Naive thymus-derived CD8-positive, alpha-beta T cell (primary cell): ENCODE measurements at regions of chr12 and their contacts with region 1.

Region 1: DNA sequence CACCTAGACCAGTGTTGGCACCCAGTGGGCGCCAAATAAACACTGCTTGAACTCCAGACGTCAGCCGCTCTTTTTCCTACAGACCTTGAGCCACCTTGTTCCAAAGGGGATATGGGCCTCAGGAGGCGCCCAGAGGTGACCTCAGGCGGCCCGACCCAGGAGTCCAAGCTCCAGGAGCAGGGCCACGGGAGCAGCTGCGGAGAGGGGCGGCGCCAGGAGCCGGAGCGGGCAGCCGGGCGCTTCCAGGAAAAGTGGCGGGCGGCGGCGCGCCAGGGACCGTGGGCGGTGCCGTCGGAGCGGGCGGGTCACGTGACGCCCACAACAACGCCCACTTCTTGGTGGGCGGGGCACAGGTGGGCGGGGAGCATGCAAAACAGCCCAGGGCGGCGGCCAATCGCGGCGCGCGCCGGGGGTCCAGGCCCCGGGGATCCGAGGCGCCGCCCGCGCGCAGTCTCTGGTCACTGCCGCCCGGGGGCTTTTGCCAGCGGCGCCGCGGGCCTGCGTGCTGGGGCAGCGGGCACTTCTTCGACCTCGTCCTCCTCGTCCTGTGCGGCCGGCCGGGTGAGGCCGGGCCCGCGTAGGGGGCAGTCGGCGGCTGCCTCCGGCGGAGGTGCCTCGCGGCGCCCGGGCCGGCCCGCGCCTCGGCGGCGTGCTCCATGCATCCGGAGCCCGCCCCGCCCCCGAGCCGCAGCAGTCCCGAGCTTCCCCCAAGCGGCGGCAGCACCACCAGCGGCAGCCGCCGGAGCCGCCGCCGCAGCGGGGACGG is at the start of gene ORAI1:
- DNase-seq: peak; percentile 91 to 98 (median 96)
- ATAC-seq: peak; percentile 68 to 69
- H3K4me3 Mint-ChIP-seq: peak within 1 kb of the TSS; percentile 93 to 98 (median 94)
- H3K27ac Mint-ChIP-seq: peak within 1 kb of the TSS; percentile 91 to 98 (median 97)
- H3K4me1 Mint-ChIP-seq: peaks cover 22 to 53% (median 48%) of the 10 kb centered on the region in 4 donors
- H3K27me3 Mint-ChIP-seq: no peaks in the 10 kb centered on the region
- polyA plus RNA-seq, gene ORAI1: 122 to 158 (median 134) TPM

Region 2: DNA sequence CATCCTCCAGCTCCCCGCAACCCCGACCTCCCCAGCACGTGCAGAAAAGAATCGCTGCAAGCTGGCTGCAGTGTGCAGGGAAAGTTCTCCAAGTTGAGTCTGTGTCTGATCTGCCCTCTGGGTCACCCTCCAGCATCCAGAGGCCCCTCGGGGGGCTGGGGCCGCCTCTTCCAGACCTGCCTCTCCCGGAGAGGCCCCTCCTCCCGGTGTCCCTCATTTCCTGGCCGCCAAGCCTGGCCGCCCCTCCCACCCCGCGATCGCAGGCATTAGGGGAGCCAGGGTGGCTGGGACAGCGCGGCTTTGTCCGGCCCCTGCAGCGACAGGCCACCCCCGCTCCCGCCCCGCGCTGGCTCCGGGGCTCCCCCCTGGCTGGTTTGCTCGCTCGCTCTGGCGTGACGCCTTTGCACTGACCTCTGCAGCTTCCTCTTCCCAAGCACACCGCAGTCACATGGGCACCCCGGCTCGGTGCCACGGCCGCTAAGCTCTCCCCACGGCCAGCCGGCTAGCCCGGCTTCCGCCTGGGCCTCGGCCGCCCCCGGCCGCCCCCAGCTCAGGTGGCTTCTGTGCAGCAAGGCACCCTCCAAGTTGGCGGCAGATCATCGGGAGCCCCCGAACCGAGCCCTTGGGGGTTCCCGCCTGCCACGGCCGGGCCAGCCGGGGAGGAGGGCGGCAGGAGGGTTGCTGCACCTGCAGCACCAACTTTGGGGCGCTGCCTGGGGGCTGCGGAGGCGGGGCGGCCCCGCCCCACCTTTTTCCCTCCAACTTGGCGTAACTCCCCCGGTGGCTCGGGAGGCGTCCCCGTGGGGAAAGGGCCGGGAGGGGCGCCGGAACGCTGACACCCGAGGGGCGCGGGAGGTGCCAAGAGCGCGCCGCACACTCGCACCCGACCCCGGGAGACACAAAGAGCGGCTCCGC is 89.1 kb before region 1 on chr12:
- POLR2A ChIA-PET with region 1: interaction called, 20 read pairs
- DNase-seq: peak; percentile 31 to 74 (median 51)
- ATAC-seq: peak in 1 of 2 donors; percentile 5
- H3K4me3 Mint-ChIP-seq: peak overlapping the region; percentile 72 to 92 (median 78)
- H3K27ac Mint-ChIP-seq: peak overlapping the region; percentile 85 to 99 (median 95)
- H3K4me1 Mint-ChIP-seq: peaks cover 19 to 66% (median 51%) of the 10 kb centered on the region in 4 donors
- H3K27me3 Mint-ChIP-seq: no peaks in the 10 kb centered on the region

Region 3: DNA sequence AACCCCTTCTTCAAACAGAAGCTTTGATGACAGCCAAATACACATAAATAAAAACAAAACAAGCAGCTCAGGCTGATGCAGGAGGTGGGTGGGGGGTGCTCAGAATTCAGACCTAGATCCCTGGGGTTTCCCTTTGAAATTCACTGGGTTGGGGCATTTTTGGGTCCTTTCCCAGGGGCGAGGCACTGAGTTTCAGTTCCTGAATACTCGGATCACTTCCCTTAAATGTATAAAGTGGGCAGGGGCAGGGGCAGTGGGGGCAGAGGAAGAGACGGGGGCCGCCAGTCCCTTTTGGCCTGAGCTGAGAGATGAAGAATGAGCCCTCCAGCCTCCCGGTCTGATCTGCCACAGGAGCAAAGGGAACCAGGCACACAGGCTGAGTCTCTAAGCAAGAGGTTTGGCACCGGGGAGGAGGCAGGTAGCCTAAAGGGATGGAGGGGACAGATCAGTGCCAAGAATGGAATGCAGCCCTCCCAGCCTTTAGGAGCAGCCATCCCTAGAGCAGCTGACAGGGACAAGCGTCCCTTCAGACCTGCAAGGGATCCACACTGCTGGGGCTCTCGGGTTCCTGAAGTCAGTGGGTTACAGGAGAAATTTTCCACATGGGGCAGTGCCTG is 65.8 kb before region 1 on chr12:
- POLR2A ChIA-PET with region 1: interaction called, 16 read pairs
- DNase-seq: no peak
- ATAC-seq: no peak
- H3K4me3 Mint-ChIP-seq: no peak overlapping the region
- H3K27ac Mint-ChIP-seq: peak overlapping the region in 2 of 10 donors; percentile 6 to 73
- H3K4me1 Mint-ChIP-seq: peaks cover 5 to 32% (median 13%) of the 10 kb centered on the region in 4 donors
- H3K27me3 Mint-ChIP-seq: no peaks in the 10 kb centered on the region

Region 4: GRCh38 chr12:121590476-121591143 is 35.7 kb before region 1 on chr12:
- POLR2A ChIA-PET with region 1: interaction called, 150 read pairs
- DNase-seq: peak; percentile 25 to 92 (median 70)
- ATAC-seq: peak; percentile 72 to 80
- H3K4me3 Mint-ChIP-seq: peak overlapping the region; percentile 65 to 91 (median 89)
- H3K27ac Mint-ChIP-seq: peak overlapping the region; percentile 95 to 99 (median 98)
- H3K4me1 Mint-ChIP-seq: peaks cover 13 to 40% (median 40%) of the 10 kb centered on the region in 4 donors
- H3K27me3 Mint-ChIP-seq: peaks cover 0 to 2% (median 0%) of the 10 kb centered on the region in 5 donors

Region 5: DNA sequence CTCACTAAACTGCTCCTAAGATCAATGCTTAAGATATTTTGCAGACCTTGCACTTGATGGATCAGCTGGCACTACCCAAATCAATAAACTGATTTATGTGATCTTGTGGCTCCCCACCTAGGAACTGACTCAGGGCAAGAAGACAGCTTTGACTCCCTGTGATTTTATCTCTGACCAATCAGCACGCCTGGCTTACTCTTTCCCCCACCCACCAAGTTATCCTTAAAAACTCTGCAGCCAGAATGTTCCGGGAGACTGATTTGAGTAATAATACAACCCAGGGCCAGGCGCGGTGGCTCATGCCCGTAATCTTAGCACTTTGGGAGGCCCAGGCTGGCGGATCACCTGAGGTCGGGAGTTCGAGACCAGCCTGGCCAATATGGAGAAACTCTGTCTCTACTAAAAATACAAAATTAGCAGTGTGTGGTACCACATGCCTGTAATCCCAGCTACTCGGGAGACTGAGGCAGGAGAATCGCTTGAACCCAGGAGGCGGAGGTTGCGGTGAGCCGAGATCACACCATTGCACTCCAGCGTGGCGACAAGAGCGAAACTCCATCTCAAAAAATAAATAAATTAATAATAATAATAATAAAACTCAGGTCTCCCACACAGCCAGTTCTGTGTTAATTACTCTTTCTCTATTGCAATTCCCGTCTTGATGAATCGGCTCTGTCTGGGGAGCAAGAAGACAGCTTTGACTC is 31.2 kb after region 1 on chr12:
- POLR2A ChIA-PET with region 1: interaction called, 30 read pairs
- DNase-seq: no peak
- ATAC-seq: no peak
- H3K4me3 Mint-ChIP-seq: peak overlapping the region in 8 of 10 donors; percentile 27 to 94 (median 60)
- H3K27ac Mint-ChIP-seq: peak overlapping the region; percentile 5 to 100 (median 98)
- H3K4me1 Mint-ChIP-seq: peaks cover 26 to 71% (median 59%) of the 10 kb centered on the region in 4 donors
- H3K27me3 Mint-ChIP-seq: no peaks in the 10 kb centered on the region

Region 6: GRCh38 chr12:121678716-121679580 is 52.7 kb after region 1 on chr12:
- POLR2A ChIA-PET with region 1: interaction called, 33 read pairs
- DNase-seq: no peak
- ATAC-seq: no peak
- H3K4me3 Mint-ChIP-seq: peak overlapping the region in 1 of 10 donors; percentile 31
- H3K27ac Mint-ChIP-seq: peak overlapping the region in 7 of 10 donors; percentile 7 to 96 (median 59)
- H3K4me1 Mint-ChIP-seq: peaks cover 4 to 10% (median 7%) of the 10 kb centered on the region in 4 donors
- H3K27me3 Mint-ChIP-seq: no peaks in the 10 kb centered on the region

Region 7: GRCh38 chr12:121802846-121803630 is 176.8 kb after region 1 on chr12:
- POLR2A ChIA-PET with region 1: interaction called, 13 read pairs
- DNase-seq: peak; percentile 79 to 96 (median 90)
- ATAC-seq: peak; percentile 51 to 55
- H3K4me3 Mint-ChIP-seq: peak overlapping the region; percentile 90 to 100 (median 96)
- H3K27ac Mint-ChIP-seq: peak overlapping the region; percentile 99 to 100 (median 99)
- H3K4me1 Mint-ChIP-seq: peaks cover 34 to 43% (median 37%) of the 10 kb centered on the region in 4 donors
- H3K27me3 Mint-ChIP-seq: no peaks in the 10 kb centered on the region